Dorsolateral prefrontal cortex (tissue), 120 donors: ENCODE measurements at regions of chr3 and their contacts with region 1.

Region 1: DNA sequence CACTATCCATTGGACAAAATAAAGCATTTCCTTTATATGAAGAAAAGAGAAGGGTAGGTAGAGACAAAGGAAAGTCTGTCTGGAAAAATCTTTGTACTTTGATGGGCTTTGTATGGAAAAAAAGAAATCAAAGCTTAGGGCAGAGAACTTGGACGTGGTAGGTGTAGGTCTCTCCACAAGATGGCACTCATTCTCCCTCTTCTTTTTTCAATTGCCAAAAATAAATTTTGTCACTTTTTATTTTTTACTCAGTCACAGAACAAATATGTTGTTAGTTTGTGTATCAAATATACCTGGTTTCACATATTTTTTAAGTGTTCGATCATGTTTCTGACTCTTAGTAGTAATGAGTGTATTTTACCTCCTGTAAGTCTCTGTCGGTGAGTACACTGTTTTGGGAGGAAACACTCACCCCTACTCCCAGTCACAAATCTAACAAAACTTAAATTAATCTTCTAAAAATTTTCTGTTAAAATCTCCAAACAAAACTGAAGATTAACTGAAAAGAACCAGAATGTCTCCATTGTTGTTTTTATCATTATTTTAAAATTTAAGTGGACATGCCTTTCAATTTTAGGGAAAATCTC is 415.8 kb upstream of the GOLIM4 start:
- DNase-seq: no peak
- H3K4me3 ChIP-seq: no peak overlapping the region
- H3K27ac ChIP-seq: no peak overlapping the region
- H3K27me3 ChIP-seq: peaks cover 0 to 8% (median 0%) of the 10 kb centered on the region in 45 donors
- CTCF ChIP-seq: peak; percentile 49 to 79 (median 65)

Region 2: GRCh38 chr3:168398371-168399025 is 113.0 kb before region 1 on chr3:
- intact Hi-C with region 1: no loop called
- DNase-seq: no peak
- H3K4me3 ChIP-seq: no peak overlapping the region
- H3K27ac ChIP-seq: no peak overlapping the region
- H3K27me3 ChIP-seq: peaks cover 0 to 2% (median 0%) of the 10 kb centered on the region in 45 donors
- CTCF ChIP-seq: no peak

Region 3: GRCh38 chr3:168620826-168621225 is 109.3 kb after region 1 on chr3:
- intact Hi-C with region 1: loop called in 1 of 2 experiments (anchors 2 kb)
- DNase-seq: peak in 6 of 10 donors; percentile 31 to 74 (median 58)
- H3K4me3 ChIP-seq: no peak overlapping the region
- H3K27ac ChIP-seq: no peak overlapping the region
- H3K27me3 ChIP-seq: peaks cover 0 to 10% (median 0%) of the 10 kb centered on the region in 45 donors
- CTCF ChIP-seq: peak in 55 of 56 donors; percentile 7 to 77 (median 61)

Region 4: GRCh38 chr3:168847291-168847883 is 335.9 kb after region 1 on chr3:
- intact Hi-C with region 1: loop called in 1 of 2 experiments (anchors 10 kb)
- DNase-seq: peak in 1 of 10 donors; percentile 20
- H3K4me3 ChIP-seq: peak overlapping the region in 22 of 59 donors; percentile 1 to 42 (median 20)
- H3K27ac ChIP-seq: no peak overlapping the region
- H3K27me3 ChIP-seq: peaks cover 0 to 16% (median 0%) of the 10 kb centered on the region in 45 donors
- CTCF ChIP-seq: peak; percentile 52 to 88 (median 72)